ENCODE measurements at regions of chr19 and their contacts with region 1.

Region 1: DNA sequence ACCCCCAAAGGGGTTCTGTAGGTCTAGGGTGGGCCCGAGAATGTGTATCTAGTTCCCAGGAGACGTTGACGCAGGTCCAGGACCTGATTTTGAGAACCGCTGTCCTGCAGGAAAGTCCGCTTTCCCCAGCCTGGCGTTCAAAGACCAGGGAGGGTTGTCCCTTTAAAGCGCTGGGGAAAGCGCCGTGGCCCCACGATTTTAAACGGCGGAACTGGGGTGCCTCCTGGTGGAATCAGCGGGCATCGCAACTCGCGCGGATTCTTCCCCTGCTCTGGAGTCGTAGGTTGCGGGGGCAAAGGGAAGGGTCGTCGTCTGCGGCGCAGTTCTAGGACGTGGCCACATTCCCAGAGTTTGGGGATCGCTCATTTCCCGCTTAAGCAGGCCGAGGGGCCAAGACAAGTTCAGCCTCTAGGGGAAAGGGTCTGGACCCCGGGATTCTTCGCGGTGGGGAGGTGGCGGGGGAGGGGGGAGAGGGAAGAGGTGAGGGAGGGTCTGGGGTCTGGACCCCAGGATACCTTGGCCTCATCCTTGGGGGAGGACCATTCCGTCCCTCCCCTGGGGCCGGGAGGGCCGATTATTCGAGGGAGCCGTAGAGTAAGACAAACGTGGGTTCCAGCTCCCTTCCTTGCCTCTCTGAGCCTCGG is 7.7 kb downstream of the PNMA8B start:
- DNase-seq: peak; percentile 69 to 88 (median 76)
- ATAC-seq: peak; percentile 55 to 76 (median 74)
- H3K4me3 ChIP-seq: peak overlapping the region in 10 of 12 donors; percentile 17 to 57 (median 42)
- H3K27ac ChIP-seq: peak overlapping the region in 1 of 12 donors; percentile 11
- H3K4me1 ChIP-seq: peaks cover under 1 to 34% (median 24%) of the 10 kb centered on the region in 12 donors
- H3K27me3 ChIP-seq: peaks cover 0 to 65% (median 48%) of the 10 kb centered on the region in 9 donors
- CTCF ChIP-seq: peak; percentile 76 to 94 (median 90)
- POLR2A ChIP-seq: no peak

Region 2: GRCh38 chr19:46328079-46328478 is 159.8 kb before region 1 on chr19:
- intact Hi-C with region 1: no loop called
- DNase-seq: no peak
- ATAC-seq: no peak
- H3K4me3 ChIP-seq: no peak overlapping the region
- H3K27ac ChIP-seq: no peak overlapping the region
- H3K4me1 ChIP-seq: peaks cover 0 to 4% (median 0%) of the 10 kb centered on the region in 12 donors
- H3K27me3 ChIP-seq: no peaks in the 10 kb centered on the region
- CTCF ChIP-seq: no peak
- POLR2A ChIP-seq: no peak

Region 3: GRCh38 chr19:46392243-46392801 is 95.6 kb before region 1 on chr19:
- intact Hi-C with region 1: loop called in 3 of 10 experiments (anchors 1 to 2 kb)
- DNase-seq: peak in 1 of 5 donors; percentile 42
- ATAC-seq: no peak
- H3K4me3 ChIP-seq: no peak overlapping the region
- H3K27ac ChIP-seq: no peak overlapping the region
- H3K4me1 ChIP-seq: peaks cover 0 to 5% (median 0%) of the 10 kb centered on the region in 12 donors
- H3K27me3 ChIP-seq: no peaks in the 10 kb centered on the region
- CTCF ChIP-seq: no peak
- POLR2A ChIP-seq: no peak

Region 4: GRCh38 chr19:46404055-46404752 is 83.7 kb before region 1 on chr19:
- intact Hi-C with region 1: loop called in 9 of 10 experiments (anchors 1 to 2 kb)
- DNase-seq: peak; percentile 48 to 74 (median 62)
- ATAC-seq: peak; percentile 17 to 68 (median 57)
- H3K4me3 ChIP-seq: peak overlapping the region in 11 of 12 donors; percentile 17 to 59 (median 47)
- H3K27ac ChIP-seq: peak overlapping the region in 11 of 12 donors; percentile 11 to 80 (median 58)
- H3K4me1 ChIP-seq: peaks cover 0 to 41% (median 16%) of the 10 kb centered on the region in 12 donors
- H3K27me3 ChIP-seq: peaks cover 0 to 60% (median 12%) of the 10 kb centered on the region in 9 donors
- CTCF ChIP-seq: peak in 5 of 12 donors; percentile 13 to 38 (median 28)
- POLR2A ChIP-seq: no peak

Region 5: DNA sequence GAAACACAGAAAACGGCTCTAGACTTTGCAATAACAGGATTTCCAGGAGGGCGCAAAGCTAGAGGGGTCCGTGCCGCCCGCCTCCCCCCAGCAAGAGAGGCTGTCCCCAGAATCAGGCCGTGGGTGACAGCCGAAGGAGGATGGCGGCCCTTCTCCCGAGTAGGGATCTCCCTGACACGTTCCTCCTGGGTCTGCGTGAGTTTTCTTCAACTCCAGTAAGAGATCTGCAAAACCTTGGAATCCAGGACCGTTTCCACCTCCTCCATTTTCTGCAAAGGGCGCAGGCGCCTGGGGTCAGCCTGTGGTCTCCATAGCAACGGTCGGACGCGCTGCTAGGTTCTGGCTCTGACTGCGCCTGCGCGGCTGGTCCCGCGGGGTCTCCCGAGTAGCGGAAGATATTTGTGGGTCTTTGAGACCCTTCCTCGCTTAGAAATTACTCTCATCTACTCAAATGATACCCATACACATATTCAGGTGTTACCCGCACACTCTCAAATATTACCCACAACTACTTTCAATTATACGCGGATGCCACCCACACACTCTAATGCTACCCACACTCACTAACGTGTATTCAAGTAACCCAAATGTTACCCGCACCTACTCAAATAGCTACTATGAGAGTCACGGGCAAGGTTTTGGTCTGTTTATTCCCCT is 61.3 kb before region 1 on chr19:
- intact Hi-C with region 1: no loop called
- DNase-seq: peak in 4 of 5 donors; percentile 79 to 85 (median 84)
- ATAC-seq: peak; percentile 61 to 90 (median 82)
- H3K4me3 ChIP-seq: peak overlapping the region; percentile 26 to 66 (median 52)
- H3K27ac ChIP-seq: peak overlapping the region in 6 of 12 donors; percentile 5 to 67 (median 34)
- H3K4me1 ChIP-seq: peaks cover 0 to 21% (median 9%) of the 10 kb centered on the region in 12 donors
- H3K27me3 ChIP-seq: peaks cover 0 to 44% (median 0%) of the 10 kb centered on the region in 9 donors
- CTCF ChIP-seq: no peak
- POLR2A ChIP-seq: no peak

Region 6: DNA sequence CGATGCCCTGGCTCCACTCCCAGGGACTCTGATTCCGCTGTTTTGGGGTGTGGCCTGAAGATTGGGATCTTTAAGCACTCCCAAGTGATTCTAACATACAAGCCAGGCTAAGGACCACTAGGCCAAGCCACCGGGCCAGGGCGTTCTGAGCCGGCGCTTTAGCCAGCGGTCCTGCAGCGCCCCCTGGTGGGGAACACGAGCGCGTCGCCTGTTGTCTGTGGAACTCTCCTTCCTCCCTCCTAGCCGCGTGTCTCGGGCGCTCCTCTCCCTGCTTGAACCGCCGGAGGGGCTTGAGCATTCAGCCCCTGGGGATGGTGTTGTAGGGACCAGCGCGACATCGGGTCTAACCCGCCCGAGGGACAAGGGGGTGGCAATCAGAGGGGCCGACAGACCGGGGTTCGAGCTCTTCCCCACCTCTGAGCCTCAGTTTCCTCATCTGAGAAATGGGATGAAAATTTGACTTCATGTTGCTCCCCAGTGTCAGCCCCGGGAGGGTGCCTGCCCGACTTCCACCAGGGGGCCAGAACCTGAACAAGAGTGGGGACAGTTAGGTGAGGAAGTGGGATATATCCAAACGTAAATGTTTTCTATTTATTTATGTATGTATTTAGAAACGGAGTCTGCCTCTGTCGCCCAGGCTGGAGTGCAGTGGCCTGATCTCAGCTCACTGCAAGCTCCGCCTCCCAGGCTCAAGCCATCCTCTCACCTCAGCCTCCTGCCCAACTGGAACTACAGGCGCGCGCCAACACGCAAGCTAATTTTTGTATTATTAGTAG is 25.7 kb after region 1 on chr19:
- intact Hi-C with region 1: loop called in 3 of 10 experiments (anchors 1 to 2 kb)
- DNase-seq: peak; percentile 73 to 86 (median 80)
- ATAC-seq: peak; percentile 42 to 94 (median 90)
- H3K4me3 ChIP-seq: no peak overlapping the region
- H3K27ac ChIP-seq: no peak overlapping the region
- H3K4me1 ChIP-seq: peaks cover 0 to 8% (median 0%) of the 10 kb centered on the region in 12 donors
- H3K27me3 ChIP-seq: peaks cover 0 to 6% (median 0%) of the 10 kb centered on the region in 9 donors
- CTCF ChIP-seq: peak; percentile 64 to 99 (median 95)
- POLR2A ChIP-seq: no peak

Measured in heart left ventricle (tissue), 16 donors.